ENCODE measurements at regions of chr18 and their contacts with region 1.

Region 1: DNA sequence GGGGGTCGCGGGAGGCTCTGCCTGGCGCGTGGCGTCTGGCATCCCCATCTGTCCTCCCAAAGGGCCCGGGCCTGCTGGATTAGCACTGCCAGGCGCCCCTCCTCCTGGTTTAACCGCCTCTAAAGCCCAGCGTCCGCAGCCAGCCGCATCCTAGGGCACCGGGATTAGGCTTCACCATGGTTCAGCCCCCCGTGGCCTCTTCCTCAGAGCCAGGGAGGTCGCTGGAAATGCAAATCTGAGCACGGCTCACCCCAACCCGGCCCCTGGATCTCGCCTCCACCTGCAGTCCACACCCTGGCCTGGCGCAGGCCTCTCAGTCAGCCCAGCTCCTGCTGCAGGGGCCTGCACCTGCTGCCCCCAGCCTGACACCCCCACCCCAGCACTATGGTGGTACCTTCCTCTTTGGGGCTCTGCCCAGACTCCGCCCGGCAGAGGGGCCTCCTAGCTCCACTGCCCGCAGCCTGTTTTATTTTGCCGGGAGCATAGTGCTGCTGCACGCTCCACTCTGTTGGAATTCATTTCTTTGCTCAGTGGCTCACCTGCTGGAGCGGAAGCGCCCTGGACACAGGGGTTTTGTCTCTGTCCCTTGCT is 13.2 kb downstream of the PRELID3A start:
- DNase-seq: no peak
- H3K4me3 ChIP-seq: no peak overlapping the region
- H3K27ac ChIP-seq: no peak overlapping the region
- H3K4me1 ChIP-seq: no peaks in the 10 kb centered on the region
- H3K27me3 ChIP-seq: no peaks in the 10 kb centered on the region
- CTCF ChIP-seq: no peak

Region 2: GRCh38 chr18:12463191-12463590 is 42.3 kb after region 1 on chr18:
- CTCF ChIA-PET with region 1: no interaction called
- POLR2A ChIA-PET with region 1: no interaction called
- intact Hi-C with region 1: no loop called
- DNase-seq: no peak
- H3K4me3 ChIP-seq: no peak overlapping the region
- H3K27ac ChIP-seq: no peak overlapping the region
- H3K4me1 ChIP-seq: no peaks in the 10 kb centered on the region
- H3K27me3 ChIP-seq: no peaks in the 10 kb centered on the region
- CTCF ChIP-seq: no peak

Region 3: DNA sequence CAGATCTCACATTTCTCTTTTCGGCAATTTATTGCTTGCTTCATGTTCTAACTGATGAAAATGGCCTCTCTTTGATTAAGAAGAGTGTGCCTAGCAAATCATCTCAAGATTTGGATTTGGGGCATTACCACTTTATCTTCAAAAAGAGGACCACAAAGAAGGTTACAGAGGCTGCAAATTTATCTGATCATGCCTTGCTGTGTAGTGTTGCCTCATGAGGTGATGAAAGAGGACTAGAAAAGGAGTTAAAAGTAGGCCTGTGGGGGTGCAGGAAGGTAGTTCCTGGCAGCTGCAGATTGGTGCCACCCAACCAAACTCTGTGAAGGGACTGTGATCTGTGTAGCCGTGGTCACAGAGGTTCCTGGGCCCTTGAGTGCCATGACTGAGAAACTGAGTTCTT is 56.0 kb after region 1 on chr18:
- CTCF ChIA-PET with region 1: no interaction called
- POLR2A ChIA-PET with region 1: interaction called, 10 read pairs
- intact Hi-C with region 1: no loop called
- DNase-seq: no peak
- H3K4me3 ChIP-seq: no peak overlapping the region
- H3K27ac ChIP-seq: no peak overlapping the region
- H3K4me1 ChIP-seq: no peaks in the 10 kb centered on the region
- H3K27me3 ChIP-seq: no peaks in the 10 kb centered on the region
- CTCF ChIP-seq: no peak

Region 4: DNA sequence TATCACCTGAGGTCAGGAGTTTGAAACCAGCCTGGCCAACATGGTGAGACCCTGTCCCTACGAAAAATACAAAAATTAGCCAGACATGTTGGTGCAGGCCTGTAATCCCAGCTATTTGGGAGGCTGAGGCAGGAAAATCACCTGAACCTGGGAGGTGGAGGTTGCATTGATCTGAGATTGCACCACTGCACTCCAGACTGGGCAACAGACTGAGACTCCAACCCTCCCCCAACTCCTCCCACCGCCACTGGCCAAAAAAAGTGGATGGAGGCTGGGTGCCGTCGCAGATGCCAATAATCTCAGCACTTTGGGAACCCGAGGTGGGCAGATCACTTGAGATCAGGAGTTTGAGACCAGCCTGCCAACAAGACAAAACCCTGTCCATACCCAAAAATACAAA is 247.1 kb after region 1 on chr18:
- CTCF ChIA-PET with region 1: interaction called, 11 read pairs
- POLR2A ChIA-PET with region 1: no interaction called
- intact Hi-C with region 1: no loop called
- DNase-seq: no peak
- H3K4me3 ChIP-seq: no peak overlapping the region
- H3K27ac ChIP-seq: no peak overlapping the region
- H3K4me1 ChIP-seq: no peaks in the 10 kb centered on the region; the same call in 1 of the 2 replicates
- H3K27me3 ChIP-seq: no peaks in the 10 kb centered on the region
- CTCF ChIP-seq: no peak

Measured in PC-9 (cell line).